Activated naive CD4-positive, alpha-beta T cell treated with anti-CD3 and anti-CD28 coated beads for 36 hours (primary cell): ENCODE measurements at regions of chr2 and their contacts with region 1.

Region 1: DNA sequence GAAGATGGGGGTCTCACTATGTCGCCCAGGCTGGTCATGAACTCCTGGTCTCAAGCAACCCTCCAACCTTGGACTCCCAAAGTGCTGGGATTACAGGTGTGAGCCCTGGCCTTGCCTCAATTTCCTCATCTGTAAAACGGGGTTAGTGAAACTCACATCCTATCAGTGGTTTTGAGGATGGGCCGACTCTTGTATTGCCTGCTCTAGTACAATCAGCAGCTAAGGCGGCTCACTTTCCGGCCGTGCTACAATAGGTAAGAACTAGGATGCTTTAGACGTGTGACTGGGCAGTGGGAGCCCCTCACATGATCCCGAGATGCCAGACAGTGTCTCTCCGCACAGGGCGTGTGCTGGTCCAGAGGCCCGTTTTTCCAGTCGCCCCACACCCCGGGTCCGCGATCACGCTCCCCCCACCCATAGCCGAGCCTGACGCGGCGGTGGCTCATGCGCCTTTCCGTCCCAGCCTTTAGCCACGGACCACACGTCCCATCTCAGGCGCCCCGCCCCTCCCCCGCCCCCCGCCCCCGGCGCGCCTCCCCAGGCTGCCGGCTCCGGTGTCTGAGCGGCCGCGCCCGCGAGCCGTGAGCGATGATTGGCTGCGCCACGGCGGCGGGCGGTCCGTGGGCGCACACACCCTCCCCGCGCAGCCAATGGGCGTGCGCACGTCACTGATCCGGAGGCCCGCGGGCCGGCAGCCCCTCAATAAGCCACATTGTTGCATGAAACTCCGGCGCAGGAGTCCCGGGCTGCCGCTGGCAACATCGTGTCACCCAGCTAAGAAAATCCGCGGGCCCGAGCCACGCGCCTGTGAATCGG is at the start of gene HK2:
- DNase-seq: peak; percentile 78
- H3K4me3 Mint-ChIP-seq: peak within 1 kb of the TSS; percentile 94
- H3K27ac Mint-ChIP-seq: peak within 1 kb of the TSS; percentile 86
- H3K4me1 Mint-ChIP-seq: peaks cover 41% of the 10 kb centered on the region
- H3K27me3 Mint-ChIP-seq: no peaks in the 10 kb centered on the region
- total RNA-seq, gene HK2: 37.9 to 38.7 TPM

Region 2: DNA sequence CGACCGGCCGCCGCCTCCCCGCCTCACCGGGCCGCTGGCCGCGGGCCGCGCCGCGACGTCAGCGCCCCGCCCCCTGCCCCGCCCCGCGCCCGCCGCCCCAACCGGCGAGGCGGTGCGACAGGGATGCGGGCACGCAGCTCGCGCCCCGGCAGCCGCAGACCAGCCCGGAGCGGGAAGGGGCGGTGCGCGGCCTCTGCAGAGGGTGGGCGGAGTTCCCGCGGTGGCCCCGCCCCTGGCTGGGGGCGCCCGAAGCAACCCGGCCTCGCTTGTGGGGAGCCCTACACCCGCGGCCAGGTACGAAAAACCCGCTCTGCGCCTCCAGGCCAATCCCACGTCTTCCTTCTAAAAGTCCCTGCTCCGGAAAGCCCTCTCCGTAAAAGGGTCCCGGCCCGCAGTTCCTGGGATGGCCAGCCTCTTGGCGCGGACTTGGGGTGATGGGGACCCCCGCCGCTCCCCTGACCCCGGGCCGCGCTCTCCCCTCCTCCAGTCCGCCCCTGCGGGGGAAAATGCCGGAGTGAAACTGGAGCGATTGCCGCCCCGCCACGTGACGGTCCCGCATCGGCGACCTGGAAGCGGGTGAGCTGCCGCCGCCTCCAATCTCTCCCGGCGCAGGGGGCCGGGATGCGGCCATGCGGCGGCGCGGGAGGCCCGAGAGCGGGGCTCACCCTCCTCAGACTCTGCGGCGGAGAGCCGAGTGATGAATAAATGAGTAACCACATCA is 1720.6 kb before region 1 on chr2 and contains the start of gene RAB11FIP5:
- CTCF ChIA-PET with region 1: no interaction called
- intact Hi-C with region 1: loop called (anchors 10 kb)
- DNase-seq: peak; percentile 78
- H3K4me3 Mint-ChIP-seq: peak within 1 kb of the TSS; percentile 81
- H3K27ac Mint-ChIP-seq: no peak within 1 kb of the TSS
- H3K4me1 Mint-ChIP-seq: peaks cover 21% of the 10 kb centered on the region
- H3K27me3 Mint-ChIP-seq: no peaks in the 10 kb centered on the region
- total RNA-seq, gene RAB11FIP5: 7.3 to 7.4 TPM

Region 3: GRCh38 chr2:74391580-74392448 is 441.8 kb before region 1 on chr2:
- CTCF ChIA-PET with region 1: no interaction called
- intact Hi-C with region 1: loop called (anchors 1 kb)
- DNase-seq: peak; percentile 98
- H3K4me3 Mint-ChIP-seq: peak overlapping the region; percentile 92
- H3K27ac Mint-ChIP-seq: peak overlapping the region; percentile 96
- H3K4me1 Mint-ChIP-seq: peaks cover 4% of the 10 kb centered on the region
- H3K27me3 Mint-ChIP-seq: no peaks in the 10 kb centered on the region

Region 4: GRCh38 chr2:74529357-74530238 is 304.0 kb before region 1 on chr2 and contains the starts of genes AUP1 and HTRA2:
- CTCF ChIA-PET with region 1: no interaction called
- intact Hi-C with region 1: loop called (anchors 2 kb)
- DNase-seq: peak; percentile 96
- H3K4me3 Mint-ChIP-seq: peak within 1 kb of the TSS; percentile 98
- H3K27ac Mint-ChIP-seq: peak within 1 kb of the TSS; percentile 91
- H3K4me1 Mint-ChIP-seq: peaks cover 40% of the 10 kb centered on the region
- H3K27me3 Mint-ChIP-seq: no peaks in the 10 kb centered on the region
- total RNA-seq, gene AUP1: 77.4 to 78.5 TPM
- total RNA-seq, gene HTRA2: 39.0 to 39.7 TPM

Region 5: GRCh38 chr2:74690571-74690970 is 143.1 kb before region 1 on chr2:
- CTCF ChIA-PET with region 1: no interaction called
- intact Hi-C with region 1: no loop called
- DNase-seq: peak; percentile 46
- H3K4me3 Mint-ChIP-seq: no peak overlapping the region
- H3K27ac Mint-ChIP-seq: no peak overlapping the region
- H3K4me1 Mint-ChIP-seq: no peaks in the 10 kb centered on the region
- H3K27me3 Mint-ChIP-seq: no peaks in the 10 kb centered on the region

Region 6: GRCh38 chr2:74715078-74715791 is 118.4 kb before region 1 on chr2:
- CTCF ChIA-PET with region 1: interaction called, 7 read pairs
- intact Hi-C with region 1: loop called (anchors 1 kb)
- DNase-seq: peak; percentile 88
- H3K4me3 Mint-ChIP-seq: peak overlapping the region; percentile 81
- H3K27ac Mint-ChIP-seq: no peak overlapping the region
- H3K4me1 Mint-ChIP-seq: peaks cover 7% of the 10 kb centered on the region
- H3K27me3 Mint-ChIP-seq: peaks cover 11% of the 10 kb centered on the region

Region 7: GRCh38 chr2:74812787-74813600 is 20.6 kb before region 1 on chr2:
- CTCF ChIA-PET with region 1: no interaction called
- intact Hi-C with region 1: no loop called
- DNase-seq: no peak
- H3K4me3 Mint-ChIP-seq: no peak overlapping the region
- H3K27ac Mint-ChIP-seq: no peak overlapping the region
- H3K4me1 Mint-ChIP-seq: peaks cover 9% of the 10 kb centered on the region
- H3K27me3 Mint-ChIP-seq: peaks cover 2% of the 10 kb centered on the region

Region 8: DNA sequence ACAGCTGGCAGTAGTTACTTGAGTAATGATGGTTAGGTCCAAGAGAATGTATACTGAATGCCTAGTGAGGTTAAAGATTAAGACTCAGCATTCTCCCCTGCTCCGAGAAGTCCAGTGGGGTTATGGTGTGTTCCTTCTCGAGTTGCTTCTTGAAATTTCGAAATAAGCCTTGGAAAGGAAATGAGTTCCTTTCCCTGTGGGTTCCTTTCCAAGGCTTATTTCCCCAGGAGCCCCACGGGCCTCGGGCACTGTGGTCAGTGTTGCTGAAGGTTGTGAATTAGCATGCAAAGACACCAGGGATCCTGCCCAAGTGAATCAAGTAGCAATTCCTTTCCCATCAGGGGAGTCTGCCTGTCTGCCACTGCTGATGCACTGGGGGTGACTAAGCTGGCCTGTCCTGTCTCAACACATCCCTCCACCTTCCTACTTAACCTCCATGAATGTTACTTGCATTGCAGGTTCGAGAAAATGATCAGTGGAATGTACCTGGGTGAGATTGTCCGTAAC is 53.9 kb after region 1 on chr2:
- CTCF ChIA-PET with region 1: no interaction called
- intact Hi-C with region 1: no loop called
- DNase-seq: no peak
- H3K4me3 Mint-ChIP-seq: no peak overlapping the region
- H3K27ac Mint-ChIP-seq: no peak overlapping the region
- H3K4me1 Mint-ChIP-seq: no peaks in the 10 kb centered on the region
- H3K27me3 Mint-ChIP-seq: no peaks in the 10 kb centered on the region

Region 9: GRCh38 chr2:74958274-74959105 is 124.9 kb after region 1 on chr2 and contains the start of gene POLE4:
- CTCF ChIA-PET with region 1: no interaction called
- intact Hi-C with region 1: loop called (anchors 1 kb)
- DNase-seq: peak; percentile 95
- H3K4me3 Mint-ChIP-seq: peak within 1 kb of the TSS; percentile 80
- H3K27ac Mint-ChIP-seq: peak within 1 kb of the TSS; percentile 87
- H3K4me1 Mint-ChIP-seq: peaks cover 60% of the 10 kb centered on the region
- H3K27me3 Mint-ChIP-seq: no peaks in the 10 kb centered on the region
- total RNA-seq, gene POLE4: 69.7 to 76.5 TPM